ENCODE measurements at regions of chr18 and their contacts with region 1.

Region 1: GRCh38 chr18:70058916-70059315 is 111.2 kb upstream of the CD226 start:
- DNase-seq: no peak
- H3K4me3 ChIP-seq: no peak overlapping the region
- H3K27ac ChIP-seq: no peak overlapping the region
- H3K27me3 ChIP-seq: no peaks in the 10 kb centered on the region
- CTCF ChIP-seq: no peak

Region 2: DNA sequence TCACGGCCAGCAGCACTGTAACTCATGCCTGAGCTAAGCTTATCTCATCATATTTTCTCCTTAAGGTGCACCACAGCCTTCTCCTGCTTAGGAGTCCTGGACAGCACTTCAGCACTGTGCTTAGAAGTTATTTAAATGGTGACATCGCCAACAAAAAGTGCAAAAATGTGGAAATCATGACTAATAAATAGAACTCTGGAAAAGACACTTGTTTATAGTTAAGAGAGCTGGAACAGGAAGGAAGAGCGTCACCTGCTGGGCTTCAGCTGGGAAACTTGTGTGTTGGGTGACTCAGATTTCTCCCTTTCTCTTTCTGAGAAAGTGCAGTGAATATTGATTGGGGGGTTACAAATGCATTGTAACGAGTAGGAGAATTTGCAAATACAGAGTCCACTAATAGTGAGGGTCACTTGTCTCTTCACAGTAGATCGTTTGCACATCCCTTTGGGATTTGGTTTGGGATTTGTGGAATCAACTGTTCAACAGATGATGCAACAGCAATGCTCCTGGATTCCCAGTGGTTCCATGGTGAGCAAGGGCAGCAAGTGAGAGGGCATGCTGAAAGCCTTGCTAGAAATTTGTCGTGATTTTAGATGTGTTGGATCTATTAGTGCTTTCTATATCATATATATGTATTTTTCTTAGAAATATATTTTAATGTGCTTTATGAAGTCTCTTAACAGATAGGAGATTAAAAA is 574.1 kb before region 1 on chr18:
- CTCF ChIA-PET with region 1: interaction called, 12 read pairs
- POLR2A ChIA-PET with region 1: no interaction called
- DNase-seq: peak; percentile 18
- H3K4me3 ChIP-seq: no peak overlapping the region
- H3K27ac ChIP-seq: no peak overlapping the region
- H3K27me3 ChIP-seq: no peaks in the 10 kb centered on the region
- CTCF ChIP-seq: peak; percentile 47

Region 3: GRCh38 chr18:69538849-69539248 is 520.1 kb before region 1 on chr18:
- CTCF ChIA-PET with region 1: no interaction called
- POLR2A ChIA-PET with region 1: no interaction called
- DNase-seq: no peak
- H3K4me3 ChIP-seq: no peak overlapping the region
- H3K27ac ChIP-seq: no peak overlapping the region
- H3K27me3 ChIP-seq: no peaks in the 10 kb centered on the region
- CTCF ChIP-seq: no peak